Motor neuron (in vitro differentiated cells): ENCODE measurements at regions of chr3 and their contacts with region 1.

Region 1: DNA sequence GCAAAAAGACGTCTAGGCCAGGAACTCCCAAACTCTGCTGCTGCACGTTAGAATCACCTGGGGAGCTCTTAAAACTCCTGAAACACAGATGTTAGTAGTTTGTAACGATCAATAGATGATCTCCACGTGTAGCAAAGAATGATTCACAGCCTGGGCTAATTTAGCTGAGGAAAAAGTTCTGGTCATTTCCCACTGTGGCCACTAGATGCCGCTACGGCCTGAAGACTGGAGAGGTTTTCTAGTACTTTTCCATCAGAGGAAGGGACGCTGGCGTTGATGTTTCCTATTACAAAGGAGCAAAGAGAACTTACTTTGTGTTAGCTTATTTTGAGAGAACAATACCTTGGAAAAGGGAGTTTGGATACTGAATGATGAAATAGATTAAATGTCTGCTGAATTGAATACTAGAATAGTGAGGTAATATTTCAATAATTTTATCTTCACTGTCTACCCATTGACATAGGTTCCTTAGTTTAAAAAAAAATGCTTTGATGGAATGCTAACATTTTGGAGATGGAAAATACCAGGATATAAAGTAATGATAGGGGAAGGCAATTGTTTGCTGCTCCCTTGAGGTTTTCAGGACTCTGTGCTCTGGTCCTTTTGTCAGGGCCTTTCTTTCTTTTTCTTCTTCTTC is 159.1 kb downstream of the P3H2 start:
- ATAC-seq: peak; percentile 65 to 86 (median 80)
- H3K4me3 ChIP-seq: no peak overlapping the region
- H3K27ac ChIP-seq: no peak overlapping the region
- H3K4me1 ChIP-seq: peaks cover 3 to 4% of the 10 kb centered on the region in 2 donors

Region 2: GRCh38 chr3:190183121-190183520 is 221.5 kb after region 1 on chr3:
- in situ Hi-C with region 1: loop called in 1 of 9 experiments (anchors 25 kb)
- ATAC-seq: peak in 7 of 8 experiments; percentile 19 to 94 (median 52)
- H3K4me3 ChIP-seq: no peak overlapping the region
- H3K27ac ChIP-seq: no peak overlapping the region
- H3K4me1 ChIP-seq: no peaks in the 10 kb centered on the region

Region 3: DNA sequence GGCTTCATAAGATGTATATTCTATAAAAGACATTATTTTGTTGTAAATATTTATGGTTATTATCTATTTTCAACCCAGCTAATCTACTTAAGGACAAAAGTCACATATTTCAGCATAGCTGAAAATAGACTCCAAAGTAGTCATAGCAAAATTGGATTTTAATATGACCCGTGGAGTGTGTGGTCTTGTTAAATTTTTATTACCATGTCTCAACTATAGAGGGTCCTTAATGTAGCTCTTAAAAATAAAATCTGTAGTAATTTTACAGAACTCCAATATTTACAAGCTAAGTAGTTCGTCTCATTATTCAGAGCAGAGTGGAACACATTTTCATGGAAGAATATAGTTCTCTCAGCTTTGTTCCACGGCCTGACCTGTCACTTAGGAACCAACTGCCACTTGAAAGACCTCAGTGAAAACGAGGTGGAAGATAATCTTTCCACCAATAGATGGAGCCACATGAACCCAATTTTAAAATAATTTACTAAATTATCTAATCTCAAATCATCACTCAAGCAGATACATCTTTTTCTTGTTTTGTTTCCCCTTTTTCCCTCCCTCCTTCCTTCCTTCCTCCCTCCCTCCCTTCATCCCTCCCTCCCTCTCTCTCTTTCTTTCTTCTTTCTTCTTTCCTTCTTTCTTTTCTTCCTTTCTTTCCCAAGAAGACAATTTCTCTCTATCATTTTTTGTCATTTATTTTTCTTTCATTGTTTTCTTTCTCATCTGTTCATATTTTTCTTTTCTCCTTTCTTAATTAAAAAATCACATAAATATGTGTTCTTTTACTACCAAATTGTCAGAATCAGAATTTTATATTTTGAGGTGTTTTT is 263.4 kb after region 1 on chr3:
- in situ Hi-C with region 1: loop called in 1 of 9 experiments (anchors 25 kb)
- ATAC-seq: peak in 4 of 8 experiments; percentile 18 to 42 (median 36)
- H3K4me3 ChIP-seq: no peak overlapping the region
- H3K27ac ChIP-seq: no peak overlapping the region
- H3K4me1 ChIP-seq: peaks cover 0 to 9% of the 10 kb centered on the region in 2 donors

Region 4: GRCh38 chr3:190321789-190322603 is 360.4 kb after region 1 on chr3 and contains the start of gene CLDN1:
- in situ Hi-C with region 1: loop called in 1 of 9 experiments (anchors 10 kb)
- ATAC-seq: peak; percentile 90 to 98 (median 95)
- H3K4me3 ChIP-seq: peak within 1 kb of the TSS; percentile 58 to 69 (median 62)
- H3K27ac ChIP-seq: no peak within 1 kb of the TSS
- H3K4me1 ChIP-seq: peaks cover 0 to 8% of the 10 kb centered on the region in 2 donors
- total RNA-seq, gene CLDN1: 0.14 to 32.0 (median 1.1) TPM in 7 of 8 experiments, not detected in the other

Region 5: GRCh38 chr3:190424478-190425439 is 463.1 kb after region 1 on chr3:
- in situ Hi-C with region 1: loop called in 1 of 9 experiments (anchors 25 kb)
- ATAC-seq: peak; percentile 71 to 98 (median 92)
- H3K4me3 ChIP-seq: no peak overlapping the region
- H3K27ac ChIP-seq: no peak overlapping the region
- H3K4me1 ChIP-seq: no peaks in the 10 kb centered on the region

Region 6: DNA sequence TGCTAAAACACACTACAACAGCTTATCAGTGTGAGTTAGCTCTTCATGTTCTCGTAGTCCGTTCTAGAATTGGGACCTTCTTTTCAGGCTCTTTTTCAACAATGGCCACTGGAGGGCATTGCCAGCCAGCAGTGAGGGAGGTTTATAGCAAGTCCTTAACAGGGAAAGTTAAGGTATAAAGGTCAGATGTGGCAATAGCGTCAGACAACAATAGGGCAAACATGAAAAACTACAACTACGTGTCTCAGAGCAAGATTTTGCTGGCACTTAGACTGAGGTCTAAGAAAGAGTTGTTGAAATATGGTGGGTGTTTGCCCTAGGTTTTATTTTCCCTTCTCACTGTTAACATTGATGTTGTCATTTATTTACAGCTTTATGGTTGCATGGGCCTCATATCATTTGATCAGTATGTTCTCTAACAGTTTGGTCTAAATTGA is 739.5 kb after region 1 on chr3:
- in situ Hi-C with region 1: loop called in 1 of 9 experiments (anchors 25 kb)
- ATAC-seq: peak; percentile 27 to 77 (median 62)
- H3K4me3 ChIP-seq: no peak overlapping the region
- H3K27ac ChIP-seq: no peak overlapping the region
- H3K4me1 ChIP-seq: peaks cover 0 to 3% of the 10 kb centered on the region in 2 donors